Lower leg skin (tissue), 4 donors: ENCODE measurements at regions of chr22 and their contacts with region 1.

Region 1: DNA sequence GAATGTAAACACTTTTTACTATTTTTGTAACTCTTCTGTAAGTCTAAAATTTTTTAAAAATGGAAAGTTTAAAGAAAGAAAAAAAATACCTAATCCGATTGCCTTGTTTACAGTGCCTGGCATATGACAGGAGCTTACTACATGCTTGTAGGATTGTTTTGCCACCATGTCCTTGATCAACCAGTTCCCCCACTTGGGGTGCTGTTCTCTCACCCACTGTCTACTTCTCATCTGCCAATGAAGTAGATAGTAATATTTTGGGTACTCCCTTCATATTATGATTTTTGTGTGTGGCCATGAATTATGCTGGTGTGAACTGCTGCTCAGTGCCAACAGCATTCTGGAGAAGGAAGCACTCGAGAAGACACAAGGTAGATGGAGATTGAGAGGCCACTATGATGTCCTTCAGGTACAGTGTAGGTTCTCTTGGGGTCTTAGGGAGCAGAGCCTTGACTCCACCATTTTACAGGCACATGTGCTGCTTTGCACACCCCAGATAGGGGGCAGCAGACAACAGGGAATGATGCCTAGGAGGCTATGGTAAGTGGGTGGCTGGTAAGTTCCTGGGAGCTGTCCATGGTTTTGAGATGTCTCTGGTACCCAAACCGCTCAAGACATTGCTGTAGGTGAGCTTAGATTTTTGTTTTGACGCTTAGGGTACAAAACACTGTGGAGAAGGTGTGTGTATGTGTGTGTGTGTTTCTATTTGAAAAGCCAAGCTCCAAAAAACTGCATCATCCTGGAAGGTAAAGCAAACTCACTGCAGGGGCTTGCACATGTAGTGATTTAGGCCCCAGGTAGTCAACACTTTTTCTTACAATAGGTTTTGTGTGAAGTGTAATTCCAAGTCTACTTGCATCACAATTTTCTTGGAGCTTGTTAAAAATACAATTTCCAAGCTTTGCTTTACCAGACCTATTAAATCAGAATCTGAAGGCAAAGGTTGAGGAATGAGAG is 494.5 kb upstream of the LARGE1 start:
- DNase-seq: peak in 1 of 2 donors; percentile 27
- H3K4me3 ChIP-seq: no peak overlapping the region
- CTCF ChIP-seq: no peak
- POLR2A ChIP-seq: no peak

Region 2: GRCh38 chr22:35023692-35024363 is 609.1 kb after region 1 on chr22:
- intact Hi-C with region 1: loop called (anchors 5 kb)
- DNase-seq: peak; percentile 33 to 92
- H3K4me3 ChIP-seq: no peak overlapping the region
- CTCF ChIP-seq: no peak
- POLR2A ChIP-seq: no peak

Region 3: GRCh38 chr22:35150183-35151107 is 735.7 kb after region 1 on chr22:
- intact Hi-C with region 1: loop called (anchors 10 kb)
- DNase-seq: peak; percentile 28 to 88
- H3K4me3 ChIP-seq: no peak overlapping the region
- CTCF ChIP-seq: no peak
- POLR2A ChIP-seq: no peak